Activated CD4-positive, alpha-beta memory T cell treated with anti-CD3 and anti-CD28 coated beads, Interleukin-2, amount 10 ng/mL, durations not matched to agents 7 days and 5 days (primary cell): ENCODE measurements at regions of chr5 and their contacts with region 1.

Region 1: DNA sequence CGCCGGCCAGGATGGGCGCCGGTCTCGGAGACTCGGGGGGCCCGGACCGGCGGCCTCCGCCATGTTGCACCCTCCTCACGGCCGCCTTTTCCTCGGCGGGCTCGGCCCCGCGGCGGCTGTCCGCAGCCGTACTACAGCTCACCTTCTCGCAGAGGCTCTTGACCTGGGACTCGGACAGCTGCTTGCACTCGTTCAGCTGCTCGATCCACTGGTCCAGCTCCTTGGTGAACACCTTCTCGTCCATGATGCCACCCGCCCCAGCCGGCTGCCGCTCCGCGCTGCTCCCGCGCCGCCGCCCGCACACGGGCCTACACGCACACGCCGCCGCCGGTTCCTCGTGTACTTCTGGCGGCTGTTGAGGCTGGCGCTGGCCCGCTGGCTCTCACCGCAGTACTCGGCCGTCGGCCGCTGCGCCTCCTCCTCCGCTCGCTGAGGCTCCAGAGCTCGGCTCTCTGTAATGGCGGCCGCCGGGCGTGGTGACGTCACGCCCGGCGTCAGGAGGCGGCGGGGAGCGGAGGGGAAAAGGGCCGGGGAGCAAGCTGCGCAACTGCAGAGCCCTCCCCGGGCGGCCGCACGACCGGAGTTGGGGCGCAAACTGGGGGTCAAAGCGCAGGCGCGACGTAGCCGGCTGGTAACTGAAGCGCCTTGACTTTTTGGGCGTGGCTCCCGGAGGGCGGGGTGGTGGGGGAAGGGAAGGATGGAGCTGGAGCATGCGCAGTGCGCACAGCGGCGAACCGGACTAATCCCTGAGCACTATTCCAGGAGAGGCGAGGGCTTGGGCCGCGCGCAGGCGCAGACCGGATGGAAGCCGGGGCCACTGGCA is at the start of gene PPP2CA:
- DNase-seq: peak; percentile 99
- H3K4me3 Mint-ChIP-seq: peak within 1 kb of the TSS; percentile 95
- H3K27ac Mint-ChIP-seq: peak within 1 kb of the TSS; percentile 98
- H3K4me1 Mint-ChIP-seq: peaks cover 45% of the 10 kb centered on the region
- H3K27me3 Mint-ChIP-seq: no peaks in the 10 kb centered on the region
- total RNA-seq, gene PPP2CA: 146 to 156 TPM

Region 2: DNA sequence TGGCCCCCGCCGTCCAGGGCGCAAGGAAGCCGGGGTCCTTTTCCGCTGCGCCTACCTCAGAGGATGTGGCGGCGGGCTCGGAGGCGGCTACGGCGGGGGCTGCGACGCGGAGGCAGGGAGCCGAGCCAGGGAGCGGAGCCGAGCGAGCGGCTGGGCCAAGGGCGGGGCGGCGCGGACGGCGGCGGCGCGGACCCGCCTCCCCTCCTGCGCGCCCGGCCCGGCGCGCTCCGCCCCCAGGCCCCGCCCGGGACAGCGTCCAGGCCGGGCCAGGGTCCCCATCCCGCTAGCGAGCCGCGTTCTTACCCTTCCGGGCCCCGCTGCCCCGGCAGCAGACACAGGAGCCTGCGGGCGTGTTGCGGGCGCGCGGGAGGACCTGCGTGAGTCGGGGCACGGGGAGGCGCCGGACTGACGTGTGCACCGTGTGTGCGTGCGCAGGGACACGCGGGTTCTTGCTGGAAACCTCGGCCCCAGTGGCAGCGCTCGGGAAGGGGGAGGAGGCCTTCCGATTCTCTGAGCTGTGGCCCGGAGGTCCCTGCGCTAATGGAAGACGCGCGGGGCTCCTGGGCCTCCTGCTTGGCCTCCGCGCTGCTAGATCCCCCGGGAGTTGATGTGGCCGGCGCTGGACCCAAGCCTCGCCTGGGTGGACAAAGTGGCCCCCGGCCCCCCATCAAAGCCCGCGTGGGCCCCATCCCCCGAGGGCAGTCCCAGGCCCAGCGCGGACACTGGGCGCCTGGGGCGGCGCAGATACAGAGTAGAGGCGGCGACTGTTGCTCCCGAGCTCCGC is 221.0 kb before region 1 on chr5 and contains the start of gene VDAC1:
- CTCF ChIA-PET with region 1: no interaction called
- POLR2A ChIA-PET with region 1: interaction called, 15 read pairs
- DNase-seq: peak; percentile 87
- H3K4me3 Mint-ChIP-seq: peak within 1 kb of the TSS; percentile 88
- H3K27ac Mint-ChIP-seq: peak within 1 kb of the TSS; percentile 90
- H3K4me1 Mint-ChIP-seq: peaks cover 43% of the 10 kb centered on the region
- H3K27me3 Mint-ChIP-seq: no peaks in the 10 kb centered on the region
- total RNA-seq, gene VDAC1: 216 to 218 TPM

Region 3: DNA sequence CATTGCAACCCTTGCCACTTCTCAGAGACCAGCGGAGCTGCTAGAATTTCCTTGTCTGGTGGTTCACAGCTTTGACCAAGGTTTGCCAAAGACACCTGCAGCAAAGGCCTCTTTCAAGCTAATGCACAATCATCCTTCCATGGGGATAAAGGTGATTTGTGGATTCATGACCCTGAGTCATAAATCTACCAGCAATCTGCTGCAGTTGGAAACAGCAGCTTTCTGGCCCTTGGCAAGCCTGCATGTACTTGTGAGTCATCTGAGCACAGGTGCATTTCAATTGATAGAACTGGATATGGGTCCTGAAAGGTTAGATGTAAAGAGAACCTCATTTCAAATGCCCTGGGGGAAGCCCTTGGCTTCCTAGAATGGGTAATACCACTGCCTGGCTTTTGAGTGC is 133.0 kb before region 1 on chr5:
- CTCF ChIA-PET with region 1: no interaction called
- POLR2A ChIA-PET with region 1: no interaction called
- DNase-seq: no peak
- H3K4me3 Mint-ChIP-seq: no peak overlapping the region
- H3K27ac Mint-ChIP-seq: no peak overlapping the region
- H3K4me1 Mint-ChIP-seq: peaks cover 11% of the 10 kb centered on the region
- H3K27me3 Mint-ChIP-seq: peaks cover 61% of the 10 kb centered on the region

Region 4: GRCh38 chr5:134215757-134216156 is 10.1 kb before region 1 on chr5:
- CTCF ChIA-PET with region 1: interaction called, 5 read pairs
- POLR2A ChIA-PET with region 1: interaction called, 39 read pairs
- DNase-seq: no peak
- H3K4me3 Mint-ChIP-seq: no peak overlapping the region
- H3K27ac Mint-ChIP-seq: no peak overlapping the region
- H3K4me1 Mint-ChIP-seq: peaks cover 34% of the 10 kb centered on the region
- H3K27me3 Mint-ChIP-seq: no peaks in the 10 kb centered on the region

Region 5: GRCh38 chr5:134370871-134371833 is 145.3 kb after region 1 on chr5 and contains the start of gene UBE2B:
- CTCF ChIA-PET with region 1: interaction called, 5 read pairs
- POLR2A ChIA-PET with region 1: interaction called, 49 read pairs
- DNase-seq: peak; percentile 98
- H3K4me3 Mint-ChIP-seq: peak within 1 kb of the TSS; percentile 97
- H3K27ac Mint-ChIP-seq: peak within 1 kb of the TSS; percentile 98
- H3K4me1 Mint-ChIP-seq: peaks cover 46% of the 10 kb centered on the region
- H3K27me3 Mint-ChIP-seq: peaks cover 2% of the 10 kb centered on the region
- total RNA-seq, gene UBE2B: 115 to 116 TPM

Region 6: DNA sequence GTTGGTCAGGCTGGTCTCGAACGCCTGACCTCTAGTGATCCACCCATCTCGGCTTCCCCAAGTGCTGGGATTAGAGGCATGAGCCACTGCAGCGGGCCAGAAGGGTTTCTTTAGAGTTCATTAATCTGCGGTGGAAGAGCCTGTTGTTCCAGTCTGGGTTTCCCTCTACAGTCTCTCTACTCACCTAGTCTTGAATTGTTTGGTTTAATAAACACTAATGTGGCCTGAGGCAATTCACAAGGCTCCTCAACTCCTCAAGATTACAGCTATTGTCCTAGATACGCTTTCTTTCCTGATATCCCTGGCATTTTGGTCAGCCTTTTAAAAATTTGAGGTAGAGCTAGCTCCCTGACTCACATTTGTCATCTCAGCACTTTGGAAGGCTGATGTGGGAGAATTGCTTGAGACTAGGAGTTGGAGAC is 411.3 kb after region 1 on chr5:
- CTCF ChIA-PET with region 1: no interaction called
- POLR2A ChIA-PET with region 1: interaction called, 16 read pairs
- DNase-seq: no peak
- H3K4me3 Mint-ChIP-seq: no peak overlapping the region
- H3K27ac Mint-ChIP-seq: no peak overlapping the region
- H3K4me1 Mint-ChIP-seq: peaks cover 14% of the 10 kb centered on the region
- H3K27me3 Mint-ChIP-seq: no peaks in the 10 kb centered on the region

Region 7: GRCh38 chr5:134758504-134759341 is 532.9 kb after region 1 on chr5 and contains the start of gene DDX46:
- CTCF ChIA-PET with region 1: no interaction called
- POLR2A ChIA-PET with region 1: interaction called, 13 read pairs
- DNase-seq: peak; percentile 95
- H3K4me3 Mint-ChIP-seq: peak within 1 kb of the TSS; percentile 95
- H3K27ac Mint-ChIP-seq: peak within 1 kb of the TSS; percentile 88
- H3K4me1 Mint-ChIP-seq: peaks cover 38% of the 10 kb centered on the region
- H3K27me3 Mint-ChIP-seq: no peaks in the 10 kb centered on the region
- total RNA-seq, gene DDX46: 51.8 to 56.7 TPM